AG04450 (cell line): ENCODE measurements at regions of chr6 and their contacts with region 1.

Region 1: DNA sequence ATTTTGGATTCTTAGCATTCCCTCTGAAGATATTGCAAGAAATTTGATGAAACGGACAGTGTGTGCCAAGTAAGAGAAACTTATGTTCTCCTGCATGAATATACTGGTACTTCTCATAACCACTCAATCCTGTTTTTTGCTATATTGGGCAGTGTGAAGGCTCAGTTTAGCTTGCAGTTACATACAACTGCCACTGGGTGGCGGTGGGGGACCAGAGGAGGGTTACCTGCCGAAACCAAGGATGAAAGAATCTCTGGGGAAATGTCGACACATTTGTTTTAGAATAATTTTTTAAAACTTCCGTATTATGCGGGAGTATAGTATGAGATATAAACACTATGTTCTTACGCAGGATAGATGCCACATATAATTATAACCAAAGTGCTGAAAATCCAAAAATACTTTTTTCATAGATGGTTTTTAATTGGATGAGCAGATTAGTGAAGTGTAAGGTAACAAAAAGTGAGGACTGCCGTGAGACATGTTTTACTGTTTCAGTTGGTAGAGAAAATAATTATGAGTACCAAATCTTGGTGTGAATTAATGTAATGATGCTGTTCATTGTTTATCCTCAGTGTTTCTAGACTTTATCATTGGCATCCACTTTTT is 9.7 kb downstream of the TRMT11 start:
- DNase-seq: no peak
- H3K4me3 ChIP-seq: no peak overlapping the region
- H3K27ac ChIP-seq: no peak overlapping the region
- H3K27me3 ChIP-seq: no peaks in the 10 kb centered on the region
- CTCF ChIP-seq: peak; percentile 99

Region 2: DNA sequence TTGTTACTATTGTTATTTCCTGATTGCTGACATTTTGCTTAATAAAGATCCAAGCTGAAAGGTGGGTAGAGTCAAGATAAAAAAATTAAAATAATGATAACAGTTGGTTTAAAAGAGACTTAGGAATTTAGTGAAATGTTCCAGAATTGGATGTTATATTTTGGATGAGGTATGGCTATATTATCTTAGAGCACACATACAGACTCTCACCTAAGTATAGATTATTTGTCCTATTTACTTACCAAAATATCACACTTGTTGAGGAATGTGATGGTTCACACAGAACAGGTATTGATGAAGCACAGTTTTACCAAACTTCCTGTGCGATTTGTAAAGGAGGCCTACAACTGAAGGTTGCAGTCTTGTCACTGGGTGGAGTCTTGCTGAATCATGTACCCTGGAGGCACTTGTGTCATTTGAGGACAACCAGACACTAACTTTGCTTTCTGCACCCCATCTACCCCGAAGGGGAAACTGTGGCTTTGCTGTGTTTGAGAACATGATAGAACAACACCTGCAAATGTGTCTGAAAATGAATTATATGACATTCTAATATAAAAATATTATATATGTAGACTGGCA is 72.0 kb before region 1 on chr6:
- CTCF ChIA-PET with region 1: no interaction called
- POLR2A ChIA-PET with region 1: no interaction called
- DNase-seq: no peak
- H3K4me3 ChIP-seq: no peak overlapping the region
- H3K27ac ChIP-seq: no peak overlapping the region
- H3K27me3 ChIP-seq: no peaks in the 10 kb centered on the region
- CTCF ChIP-seq: no peak

Region 3: DNA sequence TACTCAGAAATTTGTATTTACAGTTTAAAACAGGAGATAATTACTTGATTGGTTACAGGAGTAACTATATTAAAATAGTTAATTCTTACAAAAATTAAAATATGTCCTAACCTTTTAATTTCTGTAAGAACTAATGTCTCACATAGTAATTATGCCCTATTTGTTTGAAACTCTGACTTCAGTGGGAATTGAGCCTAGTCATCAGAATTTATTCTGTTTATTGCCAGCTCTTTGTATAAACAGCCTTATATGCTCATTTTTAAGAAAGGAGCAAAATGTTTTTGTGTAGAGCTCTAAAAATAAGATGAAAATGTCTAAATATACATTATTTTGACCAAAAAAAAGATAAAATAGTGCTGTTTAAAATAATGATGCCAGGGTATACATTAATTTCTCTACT is 11.7 kb after region 1 on chr6:
- CTCF ChIA-PET with region 1: interaction called, 34 read pairs
- POLR2A ChIA-PET with region 1: no interaction called
- DNase-seq: no peak
- H3K4me3 ChIP-seq: no peak overlapping the region
- H3K27ac ChIP-seq: no peak overlapping the region
- H3K27me3 ChIP-seq: no peaks in the 10 kb centered on the region
- CTCF ChIP-seq: no peak